ENCODE measurements at regions of chr9 and their contacts with region 1.

Region 1: GRCh38 chr9:100409176-100409556 is 17.8 kb upstream of the MSANTD3 start:
- DNase-seq: no peak
- ATAC-seq: no peak
- H3K4me3 ChIP-seq: no peak overlapping the region
- H3K4me3 Mint-ChIP-seq: no peak overlapping the region
- H3K27ac ChIP-seq: no peak overlapping the region
- H3K27ac Mint-ChIP-seq: no peak overlapping the region
- H3K4me1 ChIP-seq: peaks cover 10 to 12% of the 10 kb centered on the region in 2 experiments
- H3K4me1 Mint-ChIP-seq: peaks cover 13 to 14% (median 13%) of the 10 kb centered on the region in 3 donors
- H3K27me3 ChIP-seq: peaks cover 0 to 3% of the 10 kb centered on the region in 2 experiments
- H3K27me3 Mint-ChIP-seq: peaks cover 16 to 27% of the 10 kb centered on the region in 2 donors

Region 2: GRCh38 chr9:101579711-101580545 is 1170.8 kb after region 1 on chr9:
- CTCF ChIA-PET with region 1: no interaction called
- POLR2A ChIA-PET with region 1: interaction called in 1 of 2 experiments, 15 read pairs
- DNase-seq: no peak
- ATAC-seq: no peak
- H3K4me3 ChIP-seq: no peak overlapping the region
- H3K4me3 Mint-ChIP-seq: no peak overlapping the region
- H3K27ac ChIP-seq: no peak overlapping the region
- H3K27ac Mint-ChIP-seq: no peak overlapping the region
- H3K4me1 ChIP-seq: no peaks in the 10 kb centered on the region
- H3K4me1 Mint-ChIP-seq: peaks cover 4 to 12% (median 7%) of the 10 kb centered on the region in 3 donors
- H3K27me3 ChIP-seq: no peaks in the 10 kb centered on the region
- H3K27me3 Mint-ChIP-seq: no peaks in the 10 kb centered on the region